CD14-positive monocyte (primary cell): ENCODE measurements at regions of chr4 and their contacts with region 1.

Region 1: DNA sequence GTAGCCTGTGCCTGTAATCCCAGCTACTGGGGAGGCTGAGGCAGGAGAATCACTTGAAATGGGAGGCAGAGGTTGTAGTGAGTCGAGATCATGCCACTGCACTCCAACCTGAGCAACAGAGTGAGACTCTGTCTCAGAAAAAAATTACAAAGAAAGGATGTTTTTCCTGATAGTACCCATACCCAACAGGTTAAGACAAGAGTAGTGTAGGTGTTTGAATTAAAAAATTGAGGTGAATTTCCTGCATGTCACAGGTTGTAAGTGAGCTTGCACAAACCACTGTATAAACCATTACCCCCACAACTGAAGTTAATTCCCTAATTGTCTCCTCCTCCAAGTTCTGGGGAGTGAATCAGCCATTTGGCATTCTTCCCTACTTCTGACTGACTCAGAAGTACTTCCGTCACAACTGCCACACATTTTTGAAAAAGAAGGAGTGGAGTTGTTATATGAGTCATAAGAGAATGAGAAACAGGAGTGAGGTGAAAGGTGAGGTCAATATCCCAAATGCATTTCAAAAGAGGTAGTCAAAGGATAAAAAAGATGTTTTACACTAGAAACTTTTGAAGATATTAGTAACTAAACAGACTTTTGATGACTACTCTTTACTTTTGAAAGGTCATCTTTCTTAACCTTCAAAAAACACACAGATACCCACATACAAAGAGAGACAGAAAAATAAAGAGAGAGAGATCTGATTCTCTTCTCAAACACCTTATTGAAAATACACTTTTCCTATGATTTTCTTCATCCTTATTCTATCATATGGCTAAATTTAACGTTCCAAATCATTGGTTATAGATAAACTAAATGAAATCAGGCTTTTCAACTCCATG is 134.5 kb downstream of the BTC start:
- DNase-seq: peak; percentile 82 to 95 (median 93)
- H3K4me3 ChIP-seq: no peak overlapping the region
- H3K4me3 Mint-ChIP-seq: no peak overlapping the region
- H3K27ac ChIP-seq: no peak overlapping the region
- H3K27ac Mint-ChIP-seq: peak overlapping the region; percentile 33 to 88 (median 78)
- H3K4me1 ChIP-seq: peaks cover 7 to 18% of the 10 kb centered on the region in 2 donors
- H3K4me1 Mint-ChIP-seq: peaks cover 19% of the 10 kb centered on the region
- H3K27me3 ChIP-seq: no peaks in the 10 kb centered on the region
- H3K27me3 Mint-ChIP-seq: peaks cover 0 to 3% (median 0%) of the 10 kb centered on the region in 3 donors
- CTCF ChIP-seq: no peak

Region 2: DNA sequence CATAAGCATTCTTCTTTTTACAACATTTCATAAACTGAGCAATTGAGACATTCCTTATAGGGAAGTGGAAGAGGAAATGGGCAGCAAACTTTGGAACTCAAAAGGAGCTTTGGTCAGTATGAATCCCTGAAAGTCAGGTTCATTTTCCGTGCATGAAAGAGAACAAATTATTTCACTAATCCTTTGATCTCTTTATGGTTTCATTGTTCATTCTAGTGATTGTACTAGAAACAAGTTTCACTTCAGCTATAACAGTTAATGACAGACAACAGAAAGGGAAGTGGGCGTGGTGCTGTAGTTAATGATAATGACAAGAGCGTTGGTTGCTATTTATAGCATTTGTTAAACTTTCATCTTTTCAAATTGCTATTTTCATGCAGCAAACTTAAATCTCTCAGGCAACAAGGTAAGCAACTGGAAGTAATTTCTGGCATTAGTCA is 116.5 kb before region 1 on chr4:
- intact Hi-C with region 1: loop called in 1 of 2 experiments (anchors 10 kb)
- DNase-seq: peak; percentile 40 to 64 (median 43)
- H3K4me3 ChIP-seq: peak overlapping the region in 2 of 3 experiments; percentile 37 to 48
- H3K4me3 Mint-ChIP-seq: peak overlapping the region in 1 of 2 donors; percentile 87
- H3K27ac ChIP-seq: peak overlapping the region in 1 of 2 donors; percentile 57
- H3K27ac Mint-ChIP-seq: peak overlapping the region in 1 of 7 donors; percentile 42
- H3K4me1 ChIP-seq: peaks cover 28 to 36% of the 10 kb centered on the region in 2 donors
- H3K4me1 Mint-ChIP-seq: peaks cover 13% of the 10 kb centered on the region
- H3K27me3 ChIP-seq: no peaks in the 10 kb centered on the region
- H3K27me3 Mint-ChIP-seq: no peaks in the 10 kb centered on the region
- CTCF ChIP-seq: no peak

Region 3: GRCh38 chr4:74623041-74623440 is 36.8 kb before region 1 on chr4:
- intact Hi-C with region 1: loop called in 1 of 2 experiments (anchors 5 kb)
- DNase-seq: peak in 2 of 3 donors; percentile 36 to 51
- H3K4me3 ChIP-seq: no peak overlapping the region
- H3K4me3 Mint-ChIP-seq: no peak overlapping the region
- H3K27ac ChIP-seq: no peak overlapping the region
- H3K27ac Mint-ChIP-seq: peak overlapping the region in 5 of 7 donors; percentile 20 to 76 (median 41)
- H3K4me1 ChIP-seq: peaks cover 14 to 20% of the 10 kb centered on the region in 2 donors
- H3K4me1 Mint-ChIP-seq: peaks cover 23% of the 10 kb centered on the region
- H3K27me3 ChIP-seq: no peaks in the 10 kb centered on the region
- H3K27me3 Mint-ChIP-seq: peaks cover 0 to 3% (median 1%) of the 10 kb centered on the region in 3 donors
- CTCF ChIP-seq: peak; percentile 73